Natural killer cell (primary cell): ENCODE measurements at regions of chr3 and their contacts with region 1.

Region 1: DNA sequence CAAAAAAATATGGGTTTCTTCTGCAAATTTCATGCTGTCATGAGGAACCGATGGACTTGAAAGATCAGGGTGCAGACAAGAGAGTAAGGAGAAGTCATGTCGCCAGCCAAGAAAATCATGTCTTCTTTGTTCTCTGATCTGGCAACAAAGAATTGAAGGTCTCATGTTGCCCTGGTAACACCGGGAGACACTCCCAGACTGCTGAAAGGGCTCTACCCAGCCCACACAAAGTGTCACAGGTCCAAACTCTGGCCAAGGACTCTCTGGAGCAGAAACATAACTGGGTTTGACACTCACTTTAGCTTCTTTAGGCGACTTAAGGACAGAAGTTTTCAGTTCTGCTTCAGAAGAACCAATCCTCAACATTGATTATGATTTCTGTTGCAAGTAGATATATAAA is 42.9 kb downstream of the SIDT1 start:
- DNase-seq: no peak
- ATAC-seq: no peak
- H3K4me3 ChIP-seq: no peak overlapping the region
- H3K4me3 Mint-ChIP-seq: no peak overlapping the region
- H3K27ac ChIP-seq: no peak overlapping the region
- H3K27ac Mint-ChIP-seq: peak overlapping the region; percentile 27 to 68
- H3K4me1 ChIP-seq: no peaks in the 10 kb centered on the region
- H3K4me1 Mint-ChIP-seq: peaks cover 19 to 30% of the 10 kb centered on the region in 2 donors
- H3K27me3 ChIP-seq: no peaks in the 10 kb centered on the region
- H3K27me3 Mint-ChIP-seq: no peaks in the 10 kb centered on the region
- CTCF ChIP-seq: no peak

Region 2: GRCh38 chr3:113051302-113051711 is 523.9 kb before region 1 on chr3:
- intact Hi-C with region 1: loop called (anchors 1 kb)
- DNase-seq: peak; percentile 81 to 88
- ATAC-seq: peak; percentile 99 to 100 (median 100)
- H3K4me3 ChIP-seq: no peak overlapping the region
- H3K4me3 Mint-ChIP-seq: no peak overlapping the region
- H3K27ac ChIP-seq: no peak overlapping the region
- H3K27ac Mint-ChIP-seq: no peak overlapping the region
- H3K4me1 ChIP-seq: peaks cover 6% of the 10 kb centered on the region
- H3K4me1 Mint-ChIP-seq: peaks cover 0 to 4% of the 10 kb centered on the region in 2 donors
- H3K27me3 ChIP-seq: no peaks in the 10 kb centered on the region
- H3K27me3 Mint-ChIP-seq: no peaks in the 10 kb centered on the region
- CTCF ChIP-seq: peak; percentile 89

Region 3: GRCh38 chr3:113495035-113495434 is 80.2 kb before region 1 on chr3:
- intact Hi-C with region 1: loop called (anchors 1 kb)
- DNase-seq: peak in 1 of 2 donors; percentile 71
- ATAC-seq: peak in 1 of 3 donors; percentile 52
- H3K4me3 ChIP-seq: no peak overlapping the region
- H3K4me3 Mint-ChIP-seq: no peak overlapping the region
- H3K27ac ChIP-seq: no peak overlapping the region
- H3K27ac Mint-ChIP-seq: no peak overlapping the region
- H3K4me1 ChIP-seq: no peaks in the 10 kb centered on the region
- H3K4me1 Mint-ChIP-seq: peaks cover 2 to 3% of the 10 kb centered on the region in 2 donors
- H3K27me3 ChIP-seq: no peaks in the 10 kb centered on the region
- H3K27me3 Mint-ChIP-seq: no peaks in the 10 kb centered on the region
- CTCF ChIP-seq: peak; percentile 44